Right cardiac atrium (tissue), 5 donors: ENCODE measurements at regions of chr5 and their contacts with region 1.

Region 1: DNA sequence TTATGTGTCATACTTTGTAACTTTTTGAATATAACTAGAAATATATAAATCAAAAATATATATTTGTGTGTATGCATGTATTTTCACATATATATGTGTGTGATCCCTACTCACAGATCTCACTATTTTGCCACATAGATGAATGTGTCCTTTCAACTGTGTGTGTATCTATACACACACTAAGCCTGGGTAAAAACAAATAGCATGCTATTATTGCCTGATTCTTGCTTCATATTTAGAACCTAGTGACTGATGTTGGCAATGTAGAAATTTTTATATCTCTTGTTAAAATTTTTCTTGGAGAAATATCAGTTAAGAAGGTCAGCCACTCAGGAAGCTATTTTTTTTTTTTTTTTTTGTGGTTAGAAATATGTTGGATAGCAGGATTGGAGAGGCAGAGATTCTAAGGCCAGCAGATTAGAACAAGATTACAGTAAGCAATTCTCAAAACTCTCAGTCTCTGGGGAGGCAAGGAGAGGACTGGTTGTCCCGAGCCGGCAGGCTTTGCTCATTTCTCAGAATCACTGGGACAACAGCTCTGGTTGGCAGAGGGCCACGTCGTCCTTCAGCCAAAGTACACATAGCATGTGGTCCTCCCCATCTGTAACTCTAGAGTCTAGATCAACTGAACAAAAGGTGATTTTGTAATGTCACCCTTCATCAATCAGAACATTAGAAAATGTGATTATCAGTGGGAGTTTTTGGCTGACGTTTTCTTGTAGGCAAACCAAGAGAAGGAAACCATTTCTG is 19.7 kb downstream of the C6 start:
- DNase-seq: peak; percentile 99 to 100 (median 99)
- ATAC-seq: peak; percentile 97 to 98
- H3K4me3 ChIP-seq: no peak overlapping the region
- H3K27ac ChIP-seq: peak overlapping the region; percentile 20
- H3K4me1 ChIP-seq: no peaks in the 10 kb centered on the region
- H3K27me3 ChIP-seq: no peaks in the 10 kb centered on the region

Region 2: DNA sequence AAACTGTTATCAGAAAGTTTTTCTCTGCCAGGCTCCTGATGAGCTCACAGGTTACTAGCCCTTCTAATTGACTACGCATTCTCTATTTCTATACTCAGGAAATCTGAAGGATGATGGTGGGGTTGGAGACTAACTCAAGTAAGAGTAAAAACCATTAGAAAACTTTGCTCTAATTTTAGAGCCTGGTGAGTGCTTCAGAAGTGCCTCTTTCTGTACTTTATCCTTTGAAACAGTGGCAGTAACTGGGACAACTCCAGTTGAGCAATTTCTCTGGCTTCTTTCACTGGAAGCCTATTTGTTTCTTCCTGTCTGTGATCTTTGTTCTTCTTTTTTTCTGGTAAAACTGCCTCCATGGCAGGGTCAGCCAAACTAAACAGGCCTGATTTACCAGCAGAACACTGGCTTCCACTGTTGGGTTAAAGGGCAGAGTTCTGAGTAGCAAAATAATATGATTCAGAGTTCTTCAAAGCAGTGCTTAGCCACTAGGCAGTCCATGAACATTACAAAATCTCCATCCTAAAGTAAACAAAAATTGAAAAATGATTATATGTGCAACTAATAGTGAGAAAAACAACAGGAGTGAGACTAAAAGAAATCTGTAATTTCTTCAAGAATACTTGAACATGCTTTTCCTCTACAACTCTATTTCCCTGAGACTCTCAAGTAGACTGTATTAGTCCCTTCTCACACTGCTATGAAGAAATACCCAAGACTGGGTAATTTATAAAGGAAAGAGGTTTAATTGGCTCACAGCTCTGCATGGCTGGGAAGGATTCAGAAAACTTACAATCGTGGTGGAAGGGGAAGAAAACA is 202.3 kb before region 1 on chr5:
- intact Hi-C with region 1: loop called in 2 of 4 experiments (anchors 2 to 10 kb)
- DNase-seq: peak; percentile 66 to 73 (median 71)
- ATAC-seq: peak; percentile 94 to 96
- H3K4me3 ChIP-seq: no peak overlapping the region
- H3K27ac ChIP-seq: peak overlapping the region; percentile 85
- H3K4me1 ChIP-seq: peaks cover 7% of the 10 kb centered on the region
- H3K27me3 ChIP-seq: no peaks in the 10 kb centered on the region

Region 3: DNA sequence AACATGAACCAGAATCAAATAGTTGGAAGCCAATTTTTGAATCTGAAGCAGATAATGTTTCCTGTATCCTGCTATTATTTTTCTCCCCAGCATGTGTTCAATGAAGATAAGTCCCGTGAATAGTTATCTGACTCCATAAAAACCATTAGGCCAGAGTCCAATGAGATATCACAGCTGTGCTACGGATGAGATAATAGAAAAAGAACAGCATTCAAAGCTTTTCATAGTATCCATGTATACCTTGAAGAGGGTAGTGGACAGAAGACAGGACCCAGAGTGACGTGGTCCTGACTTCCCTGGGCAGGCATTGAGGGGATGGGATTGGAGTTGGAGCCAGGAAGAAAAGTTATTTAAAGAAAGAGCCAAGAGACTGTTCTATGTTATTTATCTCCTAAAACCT is 70.4 kb after region 1 on chr5:
- intact Hi-C with region 1: loop called in 1 of 4 experiments (anchors 5 kb)
- DNase-seq: peak in 1 of 3 donors; percentile 49
- ATAC-seq: peak; percentile 91 to 98
- H3K4me3 ChIP-seq: no peak overlapping the region
- H3K27ac ChIP-seq: peak overlapping the region; percentile 30
- H3K4me1 ChIP-seq: peaks cover 3% of the 10 kb centered on the region
- H3K27me3 ChIP-seq: no peaks in the 10 kb centered on the region

Region 4: GRCh38 chr5:41575110-41575779 is 381.6 kb after region 1 on chr5:
- intact Hi-C with region 1: no loop called
- DNase-seq: no peak
- ATAC-seq: no peak
- H3K4me3 ChIP-seq: no peak overlapping the region
- H3K27ac ChIP-seq: no peak overlapping the region
- H3K4me1 ChIP-seq: no peaks in the 10 kb centered on the region
- H3K27me3 ChIP-seq: peaks cover 2% of the 10 kb centered on the region